ENCODE measurements at regions of chr1 and their contacts with region 1.

Region 1: GRCh38 chr1:2255420-2256369 is 27.6 kb downstream of the SKI start:
- DNase-seq: peak; percentile 40 to 97 (median 66)
- ATAC-seq: peak; percentile 67
- H3K4me3 ChIP-seq: no peak overlapping the region
- H3K4me3 Mint-ChIP-seq: no peak overlapping the region
- H3K27ac ChIP-seq: peak overlapping the region; percentile 99 to 100
- H3K27ac Mint-ChIP-seq: no peak overlapping the region
- H3K4me1 ChIP-seq: peaks cover 97% of the 10 kb centered on the region
- H3K4me1 Mint-ChIP-seq: peaks cover 52% of the 10 kb centered on the region
- H3K27me3 ChIP-seq: no peaks in the 10 kb centered on the region
- H3K27me3 Mint-ChIP-seq: no peaks in the 10 kb centered on the region
- CTCF ChIP-seq: no peak

Region 2: GRCh38 chr1:2205191-2205952 is 50.3 kb before region 1 on chr1:
- CTCF ChIA-PET with region 1: no interaction called
- POLR2A ChIA-PET with region 1: interaction called, 10 read pairs
- intact Hi-C with region 1: no loop called
- DNase-seq: peak; percentile 91 to 97 (median 96)
- ATAC-seq: peak; percentile 92
- H3K4me3 ChIP-seq: peak overlapping the region; percentile 42
- H3K4me3 Mint-ChIP-seq: peak overlapping the region; percentile 68
- H3K27ac ChIP-seq: peak overlapping the region in 1 of 2 donors; percentile 35
- H3K27ac Mint-ChIP-seq: no peak overlapping the region
- H3K4me1 ChIP-seq: peaks cover 28% of the 10 kb centered on the region
- H3K4me1 Mint-ChIP-seq: peaks cover 5% of the 10 kb centered on the region
- H3K27me3 ChIP-seq: no peaks in the 10 kb centered on the region
- H3K27me3 Mint-ChIP-seq: no peaks in the 10 kb centered on the region
- CTCF ChIP-seq: no peak

Region 3: DNA sequence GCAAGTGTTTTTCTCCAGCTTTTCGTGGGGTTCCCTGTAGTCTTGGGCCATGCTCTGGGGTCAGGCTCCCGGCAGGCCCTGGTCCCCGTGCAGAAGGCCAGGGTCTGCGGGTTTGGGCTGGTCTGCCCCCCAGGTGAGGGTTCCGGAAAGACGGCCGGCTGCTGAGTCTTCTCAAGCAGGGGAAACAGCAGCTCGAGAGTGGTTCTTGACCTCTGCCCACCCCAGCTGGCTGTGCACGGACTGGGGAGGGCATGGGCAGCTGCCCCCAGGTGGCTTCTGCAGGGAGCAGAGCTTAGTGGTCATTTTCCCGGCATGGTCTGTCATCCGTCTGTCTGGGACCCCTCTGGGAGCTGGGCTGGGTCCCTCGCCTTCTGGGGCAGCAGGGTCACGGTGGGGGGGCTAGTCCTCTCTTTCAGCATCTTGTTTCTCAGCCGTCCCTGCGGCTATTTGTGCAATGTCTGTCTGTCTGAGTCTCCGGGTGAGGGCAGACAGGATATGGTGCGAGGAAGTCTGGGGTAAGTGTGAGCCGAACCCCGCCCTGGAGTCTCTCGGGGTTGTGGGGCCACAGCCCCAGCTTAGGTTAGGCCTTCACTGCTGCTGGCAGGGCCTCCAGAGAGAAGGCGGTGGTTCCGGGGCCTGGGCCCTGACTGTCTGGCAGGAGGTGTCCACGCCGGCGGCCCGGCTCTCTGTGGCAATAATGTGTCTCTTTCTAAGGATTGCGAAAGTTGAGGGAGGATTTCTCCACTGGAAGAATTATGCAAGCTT is 21.5 kb before region 1 on chr1:
- CTCF ChIA-PET with region 1: interaction called, 3 read pairs
- POLR2A ChIA-PET with region 1: interaction called, 197 read pairs
- intact Hi-C with region 1: loop called (anchors 2 kb)
- DNase-seq: peak; percentile 62 to 93 (median 80)
- ATAC-seq: peak; percentile 49
- H3K4me3 ChIP-seq: peak overlapping the region; percentile 95
- H3K4me3 Mint-ChIP-seq: peak overlapping the region; percentile 99
- H3K27ac ChIP-seq: peak overlapping the region; percentile 80 to 92
- H3K27ac Mint-ChIP-seq: peak overlapping the region; percentile 100
- H3K4me1 ChIP-seq: peaks cover 99% of the 10 kb centered on the region
- H3K4me1 Mint-ChIP-seq: peaks cover 71% of the 10 kb centered on the region
- H3K27me3 ChIP-seq: no peaks in the 10 kb centered on the region
- H3K27me3 Mint-ChIP-seq: peaks cover 20% of the 10 kb centered on the region
- CTCF ChIP-seq: no peak

Region 4: GRCh38 chr1:2290595-2291510 is 35.2 kb after region 1 on chr1:
- CTCF ChIA-PET with region 1: interaction called, 4 read pairs
- POLR2A ChIA-PET with region 1: interaction called, 12 read pairs
- intact Hi-C with region 1: loop called (anchors 1 to 2 kb)
- DNase-seq: peak; percentile 52 to 91 (median 76)
- ATAC-seq: peak; percentile 64
- H3K4me3 ChIP-seq: peak overlapping the region; percentile 51
- H3K4me3 Mint-ChIP-seq: peak overlapping the region; percentile 93
- H3K27ac ChIP-seq: peak overlapping the region; percentile 60 to 66
- H3K27ac Mint-ChIP-seq: peak overlapping the region; percentile 99
- H3K4me1 ChIP-seq: peaks cover 97% of the 10 kb centered on the region
- H3K4me1 Mint-ChIP-seq: peaks cover 87% of the 10 kb centered on the region
- H3K27me3 ChIP-seq: no peaks in the 10 kb centered on the region
- H3K27me3 Mint-ChIP-seq: no peaks in the 10 kb centered on the region
- CTCF ChIP-seq: no peak

Region 5: DNA sequence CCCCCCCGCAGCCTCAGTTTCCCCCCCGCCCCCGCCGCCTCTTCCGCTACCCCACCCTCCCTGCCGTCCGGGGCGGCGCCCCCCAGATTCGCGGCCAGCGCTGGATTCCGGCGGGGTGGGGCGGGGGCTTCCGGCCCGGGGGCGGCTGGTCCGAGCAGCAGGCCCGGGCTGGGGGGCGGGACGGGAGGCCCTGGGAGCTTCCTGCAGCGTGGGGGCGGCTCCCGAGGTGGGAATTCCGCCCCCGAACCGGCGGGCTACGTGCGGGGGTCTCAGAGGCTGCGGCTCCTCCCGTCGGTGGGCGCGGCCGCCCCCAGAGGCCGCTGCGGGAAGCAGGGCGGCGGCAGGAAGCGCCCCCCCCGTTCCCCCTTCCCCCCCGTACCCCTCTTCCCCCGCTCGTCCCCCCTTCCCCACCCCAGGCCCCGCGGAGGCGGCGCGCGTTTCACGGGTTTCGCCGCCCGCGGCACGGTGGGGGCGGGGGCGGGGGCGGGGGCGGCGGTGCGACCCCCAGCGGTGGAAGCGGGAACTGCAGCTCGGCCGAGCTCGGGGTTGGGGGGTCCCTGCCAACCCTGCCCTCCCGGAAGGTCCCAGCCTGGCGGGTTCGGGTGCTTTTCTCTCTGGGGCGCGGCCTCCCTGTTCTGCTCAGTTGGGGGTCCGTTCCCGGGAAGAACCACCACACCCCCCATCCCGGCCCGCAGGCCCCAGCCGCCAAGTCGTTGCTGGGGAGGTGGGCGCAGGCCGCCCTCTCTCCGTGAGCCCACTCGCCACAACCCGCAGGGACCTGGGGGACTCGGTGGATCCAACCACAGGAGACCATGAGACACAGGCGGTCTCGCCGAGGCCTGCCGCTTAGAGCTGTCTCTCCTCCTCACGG is 59.3 kb after region 1 on chr1:
- CTCF ChIA-PET with region 1: interaction called, 4 read pairs
- POLR2A ChIA-PET with region 1: interaction called, 14 read pairs
- intact Hi-C with region 1: loop called in 1 of 2 experiments (anchors 2 kb)
- DNase-seq: peak; percentile 41 to 86 (median 66)
- ATAC-seq: peak; percentile 45
- H3K4me3 ChIP-seq: peak overlapping the region; percentile 56
- H3K4me3 Mint-ChIP-seq: peak overlapping the region; percentile 83
- H3K27ac ChIP-seq: peak overlapping the region; percentile 47 to 61
- H3K27ac Mint-ChIP-seq: peak overlapping the region; percentile 81
- H3K4me1 ChIP-seq: peaks cover 61% of the 10 kb centered on the region
- H3K4me1 Mint-ChIP-seq: peaks cover 19% of the 10 kb centered on the region
- H3K27me3 ChIP-seq: no peaks in the 10 kb centered on the region
- H3K27me3 Mint-ChIP-seq: no peaks in the 10 kb centered on the region
- CTCF ChIP-seq: peak; percentile 96

Region 6: GRCh38 chr1:2391041-2391930 is 135.6 kb after region 1 on chr1 and contains the starts of genes MORN1 and RER1:
- CTCF ChIA-PET with region 1: no interaction called
- POLR2A ChIA-PET with region 1: interaction called, 19 read pairs
- intact Hi-C with region 1: no loop called
- DNase-seq: peak; percentile 97 to 100 (median 99)
- ATAC-seq: peak; percentile 95
- H3K4me3 ChIP-seq: peak within 1 kb of the TSS; percentile 64
- H3K4me3 Mint-ChIP-seq: peak within 1 kb of the TSS; percentile 95
- H3K27ac ChIP-seq: peak within 1 kb of the TSS; percentile 60 to 63
- H3K27ac Mint-ChIP-seq: peak within 1 kb of the TSS; percentile 88
- H3K4me1 ChIP-seq: peaks cover 45% of the 10 kb centered on the region
- H3K4me1 Mint-ChIP-seq: peaks cover 31% of the 10 kb centered on the region
- H3K27me3 ChIP-seq: no peaks in the 10 kb centered on the region
- H3K27me3 Mint-ChIP-seq: no peaks in the 10 kb centered on the region
- CTCF ChIP-seq: no peak
- total RNA-seq, gene MORN1: 5.3 to 6.5 TPM
- total RNA-seq, gene RER1: 57.9 to 60.7 TPM

Region 7: GRCh38 chr1:2514863-2515762 is 259.4 kb after region 1 on chr1:
- CTCF ChIA-PET with region 1: no interaction called
- POLR2A ChIA-PET with region 1: no interaction called
- intact Hi-C with region 1: no loop called
- DNase-seq: no peak
- ATAC-seq: no peak
- H3K4me3 ChIP-seq: no peak overlapping the region
- H3K4me3 Mint-ChIP-seq: no peak overlapping the region
- H3K27ac ChIP-seq: no peak overlapping the region
- H3K27ac Mint-ChIP-seq: no peak overlapping the region
- H3K4me1 ChIP-seq: no peaks in the 10 kb centered on the region
- H3K4me1 Mint-ChIP-seq: no peaks in the 10 kb centered on the region
- H3K27me3 ChIP-seq: no peaks in the 10 kb centered on the region
- H3K27me3 Mint-ChIP-seq: no peaks in the 10 kb centered on the region
- CTCF ChIP-seq: no peak